BJ (cell line): ENCODE measurements at regions of chr1 and their contacts with region 1.

Region 1: DNA sequence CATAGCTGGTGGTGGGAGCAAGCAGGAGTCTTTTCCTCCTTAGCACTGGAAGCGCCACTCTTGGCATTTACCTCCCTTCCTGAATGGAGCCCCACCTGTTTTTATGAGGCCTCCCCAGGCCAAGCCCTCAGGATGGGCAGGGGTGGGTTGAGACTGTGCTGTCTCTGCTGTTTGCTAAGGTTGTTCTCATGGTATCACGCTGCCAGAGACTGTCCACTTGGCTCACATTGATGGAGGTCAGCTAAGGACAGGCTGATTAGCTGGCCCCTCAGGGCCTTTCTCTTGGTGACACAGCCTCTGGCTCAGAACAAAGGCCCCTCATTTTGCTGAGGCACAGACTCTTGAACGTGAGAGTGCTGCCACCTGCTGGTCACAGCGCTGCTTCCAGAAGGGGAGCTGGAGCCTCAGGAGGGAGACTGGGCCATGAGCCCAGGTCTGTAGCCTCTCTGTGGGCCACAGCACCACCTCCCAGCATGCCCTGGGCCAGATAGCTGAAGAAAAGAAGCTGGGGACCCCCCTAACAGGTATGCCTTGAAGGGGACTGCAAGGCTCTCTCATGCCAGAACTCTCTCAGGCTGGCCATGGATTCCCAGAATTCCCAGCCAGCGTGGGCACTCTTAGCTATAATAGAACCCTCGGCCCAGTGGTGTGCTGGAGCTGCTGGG is 85.6 kb downstream of the CD58 start:
- DNase-seq: no peak
- H3K4me3 ChIP-seq: no peak overlapping the region
- H3K27me3 ChIP-seq: no peaks in the 10 kb centered on the region; the same call in 1 of the 2 replicates
- CTCF ChIP-seq: peak; percentile 88

Region 2: DNA sequence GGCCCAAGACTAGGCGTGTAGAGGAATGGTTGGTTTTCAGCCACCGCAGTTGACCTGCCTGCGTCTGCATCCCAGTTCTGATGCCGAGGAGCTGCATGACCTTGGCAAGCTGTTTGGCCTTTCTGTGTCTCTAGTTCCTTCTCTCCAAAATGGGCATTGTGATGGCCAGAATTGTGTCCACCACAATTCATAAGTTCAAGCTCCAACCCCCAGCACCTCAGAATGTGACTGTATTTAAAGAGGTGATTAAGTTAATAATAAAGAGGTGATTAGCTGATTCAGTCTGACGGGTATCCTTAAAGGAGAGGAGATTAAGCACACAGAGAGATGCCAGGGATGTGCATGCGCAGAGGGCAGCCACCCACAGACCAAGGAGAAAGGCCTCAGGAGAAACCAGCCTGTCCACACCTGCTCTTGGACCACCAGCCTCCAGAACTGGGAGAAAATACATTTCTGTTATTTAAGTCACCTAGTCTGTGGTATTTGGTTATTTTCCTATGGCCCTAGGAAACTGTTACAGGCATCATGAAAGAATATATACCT is 345.5 kb before region 1 on chr1:
- CTCF ChIA-PET with region 1: interaction called, 175 read pairs
- POLR2A ChIA-PET with region 1: no interaction called
- DNase-seq: no peak
- H3K4me3 ChIP-seq: no peak overlapping the region
- H3K27me3 ChIP-seq: 0 out of 2 replicates have a peak, but pooled peaks cover under 1% of the 10 kb centered on the region
- CTCF ChIP-seq: no peak

Region 3: GRCh38 chr1:116360429-116361173 is 124.6 kb before region 1 on chr1:
- CTCF ChIA-PET with region 1: interaction called, 23 read pairs
- POLR2A ChIA-PET with region 1: no interaction called
- DNase-seq: no peak
- H3K4me3 ChIP-seq: no peak overlapping the region
- H3K27me3 ChIP-seq: peaks cover 3% of the 10 kb centered on the region; the same call in 1 of the 2 replicates
- CTCF ChIP-seq: no peak

Region 4: GRCh38 chr1:116462722-116463121 is 22.5 kb before region 1 on chr1:
- CTCF ChIA-PET with region 1: interaction called, 11 read pairs
- POLR2A ChIA-PET with region 1: no interaction called
- DNase-seq: no peak
- H3K4me3 ChIP-seq: no peak overlapping the region
- H3K27me3 ChIP-seq: peaks cover 3% of the 10 kb centered on the region; the same call in 1 of the 2 replicates
- CTCF ChIP-seq: no peak

Region 5: DNA sequence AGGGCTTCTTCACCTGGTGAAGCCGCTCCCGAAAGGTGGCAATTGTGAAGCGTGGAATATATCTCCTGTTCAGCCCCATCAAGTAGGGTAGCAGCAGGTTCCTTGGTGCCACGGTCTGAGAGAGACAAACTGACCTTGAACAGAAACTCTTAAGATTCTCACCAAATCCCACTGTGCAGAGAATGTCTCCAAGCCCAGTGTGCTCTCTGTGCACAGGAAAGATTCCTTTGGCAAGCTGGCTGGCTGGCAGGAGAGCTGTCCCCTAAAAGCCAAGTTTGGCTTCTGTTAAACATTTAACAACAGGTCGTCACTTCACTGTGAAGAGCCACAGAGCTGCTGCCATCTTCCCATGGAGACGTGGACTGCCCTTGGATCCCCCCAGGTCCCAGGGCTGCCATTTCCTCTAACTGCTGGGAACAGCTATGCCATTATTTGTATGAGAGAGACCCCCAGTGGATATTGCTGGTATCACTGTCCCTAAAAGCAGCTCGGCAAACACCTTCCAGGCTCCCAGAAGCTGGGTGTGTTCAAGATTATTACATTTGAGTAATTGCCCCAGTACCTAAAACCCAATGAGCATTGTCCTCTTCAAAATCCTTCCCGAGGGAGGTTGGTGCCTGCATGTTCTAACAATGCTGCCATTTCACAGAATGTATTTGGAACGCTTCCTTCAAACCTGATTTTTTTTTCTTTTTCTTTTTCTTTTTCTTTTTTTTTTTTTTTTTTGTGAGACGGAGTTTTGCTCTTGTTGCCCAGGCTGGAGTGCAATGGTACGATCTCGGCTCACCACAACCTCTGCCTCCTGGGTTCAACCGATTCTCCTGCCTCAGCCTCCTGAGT is 13.8 kb after region 1 on chr1:
- CTCF ChIA-PET with region 1: interaction called, 110 read pairs
- POLR2A ChIA-PET with region 1: no interaction called
- DNase-seq: no peak
- H3K4me3 ChIP-seq: no peak overlapping the region
- H3K27me3 ChIP-seq: no peaks in the 10 kb centered on the region
- CTCF ChIP-seq: peak; percentile 78